ENCODE measurements at regions of chr1 and their contacts with region 1.

Region 1: GRCh38 chr1:225474986-225475820 is 47.4 kb upstream of the LBR start:
- DNase-seq: peak; percentile 81
- H3K4me3 Mint-ChIP-seq: no peak overlapping the region
- H3K27ac Mint-ChIP-seq: no peak overlapping the region
- H3K4me1 Mint-ChIP-seq: peaks cover 10% of the 10 kb centered on the region
- H3K27me3 Mint-ChIP-seq: no peaks in the 10 kb centered on the region
- CTCF ChIP-seq: peak; percentile 100

Region 2: GRCh38 chr1:225554216-225554812 is 79.1 kb after region 1 on chr1:
- CTCF ChIA-PET with region 1: no interaction called
- intact Hi-C with region 1: loop called (anchors 5 kb)
- DNase-seq: peak; percentile 19
- H3K4me3 Mint-ChIP-seq: no peak overlapping the region
- H3K27ac Mint-ChIP-seq: no peak overlapping the region
- H3K4me1 Mint-ChIP-seq: peaks cover 8% of the 10 kb centered on the region
- H3K27me3 Mint-ChIP-seq: no peaks in the 10 kb centered on the region
- CTCF ChIP-seq: peak; percentile 51

Region 3: GRCh38 chr1:225845571-225846259 is 370.5 kb after region 1 on chr1:
- CTCF ChIA-PET with region 1: no interaction called
- intact Hi-C with region 1: loop called (anchors 5 kb)
- DNase-seq: peak; percentile 83
- H3K4me3 Mint-ChIP-seq: no peak overlapping the region
- H3K27ac Mint-ChIP-seq: peak overlapping the region; percentile 60
- H3K4me1 Mint-ChIP-seq: no peaks in the 10 kb centered on the region
- H3K27me3 Mint-ChIP-seq: no peaks in the 10 kb centered on the region
- CTCF ChIP-seq: peak; percentile 63

Region 4: DNA sequence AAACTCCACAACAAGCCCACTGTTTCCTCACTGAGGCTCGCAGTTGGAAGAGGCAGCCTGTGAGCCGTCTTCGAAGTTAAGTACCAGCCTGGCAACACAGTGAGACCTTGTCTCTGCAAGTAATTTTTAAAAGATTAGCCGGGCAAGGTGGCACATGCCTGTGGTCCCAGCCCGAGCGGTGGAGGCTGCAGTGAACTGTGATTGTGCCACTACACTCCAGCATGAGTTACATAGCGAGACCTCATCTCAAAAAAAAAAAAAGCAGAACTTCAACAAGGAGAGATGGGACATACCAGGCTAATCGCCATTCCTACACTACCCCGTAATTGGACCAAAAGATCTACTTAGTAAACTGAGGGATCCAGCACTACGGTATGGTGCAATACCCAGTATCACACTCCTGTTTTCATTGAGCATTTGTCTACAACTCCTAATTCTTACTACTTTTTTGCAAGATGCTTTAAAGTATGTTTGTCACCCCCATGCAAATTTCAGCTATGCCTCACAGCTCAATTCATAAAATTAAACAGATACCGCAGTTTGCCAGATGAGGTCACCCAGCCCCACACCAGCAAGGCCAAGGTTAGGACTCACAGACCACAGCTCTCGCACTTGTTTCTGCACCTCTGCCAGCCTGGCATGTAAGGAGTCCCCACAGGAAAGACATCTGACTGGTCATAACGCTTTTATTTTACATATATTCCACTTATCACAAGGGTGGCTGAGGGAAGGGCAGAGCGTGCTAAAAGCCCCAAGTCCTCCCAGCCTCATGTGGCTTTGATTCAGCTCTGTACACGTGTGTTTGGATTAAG is 502.9 kb after region 1 on chr1:
- CTCF ChIA-PET with region 1: interaction called, 3 read pairs
- intact Hi-C with region 1: loop called (anchors 2 kb)
- DNase-seq: no peak
- H3K4me3 Mint-ChIP-seq: no peak overlapping the region
- H3K27ac Mint-ChIP-seq: no peak overlapping the region
- H3K4me1 Mint-ChIP-seq: no peaks in the 10 kb centered on the region
- H3K27me3 Mint-ChIP-seq: no peaks in the 10 kb centered on the region
- CTCF ChIP-seq: no peak

Measured in Calu3 (cell line).